Activated B cell treated with CpG ODN at 0.5 μM for 24 hours (primary cell): ENCODE measurements at regions of chr16 and their contacts with region 1.

Region 1: DNA sequence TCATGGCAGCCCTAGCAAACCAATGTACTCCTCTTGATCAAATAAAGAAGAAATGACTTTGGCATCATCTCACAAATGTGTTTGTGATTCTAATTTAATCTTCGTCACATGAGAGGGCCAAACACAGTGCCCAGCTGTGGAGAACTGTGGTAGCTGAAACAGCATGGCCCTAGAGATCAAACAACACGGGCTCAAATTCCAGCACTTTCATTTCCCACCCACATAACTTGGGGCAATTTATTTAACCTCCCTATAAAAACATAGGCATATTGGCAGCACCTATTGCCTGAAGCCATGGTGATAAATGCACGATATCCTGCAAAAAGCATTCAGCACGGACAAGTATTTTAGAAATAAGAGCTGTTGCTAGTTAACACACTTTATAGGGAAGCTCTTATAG is 2.5 kb downstream of the ACSM1 start:
- DNase-seq: no peak
- ATAC-seq: no peak
- H3K4me3 Mint-ChIP-seq: no peak overlapping the region
- H3K27ac Mint-ChIP-seq: no peak overlapping the region
- H3K4me1 Mint-ChIP-seq: peaks cover 14% of the 10 kb centered on the region
- H3K27me3 Mint-ChIP-seq: no peaks in the 10 kb centered on the region
- CTCF ChIP-seq: no peak

Region 2: DNA sequence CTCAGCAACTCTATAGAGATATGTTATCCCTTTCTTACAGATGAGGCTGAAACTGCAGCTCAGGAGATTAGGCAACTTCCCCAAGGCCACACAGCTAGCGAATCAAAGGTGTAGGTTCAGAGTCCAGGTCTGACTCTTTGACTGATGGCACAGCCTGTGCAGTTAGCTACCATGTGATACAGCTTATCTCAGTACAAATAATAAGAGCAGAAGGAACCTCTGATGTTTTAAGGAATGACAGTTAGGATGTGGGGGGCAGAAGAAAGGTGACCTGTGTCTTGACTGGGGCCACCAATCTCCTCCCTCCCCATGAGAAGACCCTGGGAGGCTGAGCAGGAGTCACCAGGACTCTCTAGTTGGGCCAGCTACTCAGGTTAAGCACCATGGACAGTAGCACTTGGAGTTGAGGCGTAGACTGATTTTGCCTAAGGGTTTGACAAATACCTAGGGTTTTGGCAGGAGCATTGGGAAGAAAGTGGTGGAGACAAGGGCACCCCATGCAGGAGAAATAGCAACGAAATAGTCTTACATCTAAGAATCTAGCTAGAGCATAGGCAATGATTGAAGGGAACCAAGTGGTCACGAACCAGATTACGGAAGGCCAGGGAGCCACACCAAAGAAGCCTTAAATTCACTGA is 96.1 kb before region 1 on chr16:
- CTCF ChIA-PET with region 1: no interaction called
- POLR2A ChIA-PET with region 1: no interaction called
- intact Hi-C with region 1: loop called (anchors 1 kb)
- DNase-seq: no peak
- ATAC-seq: no peak
- H3K4me3 Mint-ChIP-seq: no peak overlapping the region
- H3K27ac Mint-ChIP-seq: no peak overlapping the region
- H3K4me1 Mint-ChIP-seq: no peaks in the 10 kb centered on the region
- H3K27me3 Mint-ChIP-seq: peaks cover 7% of the 10 kb centered on the region
- CTCF ChIP-seq: no peak

Region 3: DNA sequence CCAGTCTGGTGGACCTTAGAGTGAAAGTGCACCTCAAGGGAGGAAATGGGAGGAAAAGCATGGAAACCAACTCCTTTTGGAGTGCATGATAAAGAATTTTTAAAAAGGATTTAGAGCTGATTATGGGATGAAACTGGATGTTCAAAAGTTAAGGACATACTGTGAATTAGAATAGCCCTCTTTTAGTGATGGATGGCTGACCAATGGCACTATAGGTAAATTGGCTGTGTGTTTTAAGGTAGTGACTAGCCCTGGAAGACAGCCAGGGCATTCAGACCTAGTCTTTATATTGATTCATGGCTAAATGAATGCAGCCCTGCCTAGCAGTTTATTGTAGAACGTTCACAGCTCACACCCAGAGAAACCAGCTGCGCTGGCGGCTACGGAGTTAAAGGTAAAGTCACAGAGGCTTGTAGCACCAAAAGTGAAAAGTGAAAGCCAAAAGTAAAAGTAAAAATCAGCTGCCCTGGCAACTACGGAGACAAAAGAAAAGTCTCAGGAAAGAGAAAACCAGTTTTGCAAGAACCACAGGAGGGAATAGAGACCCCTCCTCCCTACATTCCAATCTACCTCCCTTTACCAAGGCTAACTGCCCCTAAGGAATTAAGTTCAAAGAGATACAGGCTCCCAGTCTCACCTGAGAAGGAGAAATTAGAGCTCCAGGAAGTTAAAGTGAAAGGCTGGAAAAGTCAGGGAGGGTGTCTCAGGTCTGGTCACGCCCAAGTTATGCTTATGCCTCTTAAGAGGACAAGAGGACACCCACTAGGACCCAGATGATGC is 19.3 kb before region 1 on chr16:
- CTCF ChIA-PET with region 1: interaction called, 11 read pairs
- POLR2A ChIA-PET with region 1: interaction called, 4 read pairs
- intact Hi-C with region 1: no loop called
- DNase-seq: no peak
- ATAC-seq: peak; percentile 50
- H3K4me3 Mint-ChIP-seq: peak overlapping the region; percentile 85
- H3K27ac Mint-ChIP-seq: peak overlapping the region; percentile 88
- H3K4me1 Mint-ChIP-seq: peaks cover 55% of the 10 kb centered on the region
- H3K27me3 Mint-ChIP-seq: no peaks in the 10 kb centered on the region
- CTCF ChIP-seq: no peak

Region 4: DNA sequence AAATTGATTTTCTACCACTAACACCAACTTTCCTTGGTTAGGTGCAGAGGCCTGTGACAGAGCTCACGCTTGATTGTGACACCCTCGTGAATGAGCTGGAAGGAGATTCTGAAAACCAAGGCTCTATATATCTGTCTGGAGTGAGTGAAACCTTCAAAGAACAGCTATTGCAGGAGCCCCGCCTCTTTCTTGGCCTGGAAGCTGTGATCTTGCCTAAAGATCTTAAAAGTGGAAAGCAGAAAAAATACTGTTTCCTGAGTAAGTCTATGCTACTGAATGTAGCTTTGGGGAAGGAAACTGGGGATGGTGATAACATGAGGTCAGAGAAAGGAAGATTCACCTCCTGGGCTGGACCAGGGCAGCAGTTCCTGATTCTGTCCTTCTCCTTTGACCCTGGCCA is 149.6 kb after region 1 on chr16:
- CTCF ChIA-PET with region 1: no interaction called
- POLR2A ChIA-PET with region 1: no interaction called
- intact Hi-C with region 1: no loop called
- DNase-seq: no peak
- ATAC-seq: no peak
- H3K4me3 Mint-ChIP-seq: no peak overlapping the region
- H3K27ac Mint-ChIP-seq: no peak overlapping the region
- H3K4me1 Mint-ChIP-seq: no peaks in the 10 kb centered on the region
- H3K27me3 Mint-ChIP-seq: no peaks in the 10 kb centered on the region
- CTCF ChIP-seq: no peak